ENCODE measurements at regions of chrX and their contacts with region 1.

Region 1: GRCh38 chrX:10119399-10119990 is 37.3 kb upstream of the CLCN4 start:
- DNase-seq: no peak
- ATAC-seq: peak; percentile 79

Region 2: GRCh38 chrX:9995855-9996339 is 123.6 kb before region 1 on chrX:
- intact Hi-C with region 1: loop called (anchors 5 kb)
- DNase-seq: peak; percentile 90
- ATAC-seq: peak; percentile 97

Region 3: DNA sequence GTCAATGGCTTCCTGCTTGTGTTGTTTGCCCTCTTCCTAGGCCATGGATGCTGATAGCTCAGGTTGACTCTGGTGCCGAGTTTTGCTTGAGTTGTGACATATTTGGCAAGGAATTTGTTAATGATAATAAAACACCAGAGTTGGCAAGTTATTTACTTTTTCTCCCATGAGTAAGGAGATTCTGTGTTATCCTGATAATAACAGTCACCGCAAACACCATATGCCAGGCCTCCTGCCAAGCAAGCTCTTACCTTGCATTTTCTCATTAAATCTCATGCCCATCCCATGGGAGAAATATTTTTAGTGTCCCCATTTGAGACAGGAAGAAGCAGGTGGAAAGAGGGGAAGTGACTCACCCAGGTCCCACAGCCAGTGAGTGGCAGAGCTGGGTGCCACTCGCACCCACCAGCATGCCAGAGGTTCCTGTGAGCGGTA is 30.1 kb before region 1 on chrX:
- intact Hi-C with region 1: no loop called
- DNase-seq: no peak
- ATAC-seq: no peak

Region 4: GRCh38 chrX:10496345-10496965 is 377.0 kb after region 1 on chrX:
- intact Hi-C with region 1: no loop called
- DNase-seq: no peak
- ATAC-seq: peak; percentile 65

Measured in Right ventricle myocardium superior (tissue), 1 donor.